Posterior cingulate gyrus (tissue), 11 donors: ENCODE measurements at regions of chr12 and their contacts with region 1.

Region 1: DNA sequence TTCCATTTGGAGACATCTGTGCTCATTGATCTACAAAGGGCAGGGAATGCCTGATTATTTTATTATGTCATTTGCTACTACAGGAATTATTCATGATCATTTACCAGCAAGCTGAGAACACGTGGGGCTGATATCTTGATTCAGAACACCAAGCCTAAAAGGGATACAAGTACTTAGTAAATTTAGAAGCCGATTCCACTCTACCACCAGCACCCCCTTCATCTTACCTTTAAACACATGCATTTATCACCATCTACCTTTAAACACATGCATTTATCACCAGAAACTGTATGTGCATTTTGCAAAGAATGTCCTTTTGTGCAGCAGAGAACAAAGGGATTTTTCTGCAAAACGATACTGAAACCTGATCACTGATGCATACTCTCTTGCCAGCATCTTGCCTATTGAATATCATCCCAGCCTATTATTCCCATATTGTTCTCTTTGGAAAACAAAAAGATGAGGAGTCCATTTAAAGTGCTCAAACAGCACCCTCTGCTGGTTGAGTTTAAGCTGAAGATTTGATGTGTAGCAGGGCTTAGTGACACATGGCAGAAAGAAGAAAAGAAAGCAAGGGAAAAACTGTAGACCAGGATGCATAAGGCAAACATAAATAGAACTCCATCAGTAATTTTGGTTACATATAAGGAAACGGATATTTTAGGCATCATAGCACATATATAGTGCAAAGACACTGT is 132.6 kb upstream of the PLEKHG7 start:
- DNase-seq: peak in 5 of 10 donors; percentile 19 to 69 (median 31)

Region 2: GRCh38 chr12:91361864-91362263 is 1208.3 kb before region 1 on chr12:
- intact Hi-C with region 1: loop called (anchors 5 kb)
- DNase-seq: no peak

Region 3: DNA sequence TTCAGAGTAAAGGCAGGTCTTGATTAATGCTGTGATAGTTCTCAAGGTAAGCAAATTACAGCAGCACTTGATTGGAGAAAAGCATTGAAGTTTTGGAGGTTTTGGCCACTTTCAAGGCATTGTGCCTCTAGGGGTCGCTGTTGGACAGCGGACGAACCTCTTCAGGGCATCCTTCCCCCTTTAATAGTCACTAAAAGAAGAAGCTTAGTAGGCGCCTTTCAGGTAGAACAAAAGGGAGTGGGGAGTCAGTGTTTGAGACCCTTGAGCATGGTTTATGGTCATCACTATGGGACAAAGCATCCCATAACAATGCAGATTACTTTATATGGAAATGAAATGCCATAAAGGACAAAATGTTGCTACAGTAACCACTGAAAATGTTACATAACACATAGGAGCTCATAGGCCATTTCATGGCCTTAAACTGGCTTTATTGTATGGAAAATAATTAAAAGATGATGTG is 1188.1 kb before region 1 on chr12:
- intact Hi-C with region 1: loop called (anchors 1 kb)
- DNase-seq: peak; percentile 71 to 97 (median 90)

Region 4: DNA sequence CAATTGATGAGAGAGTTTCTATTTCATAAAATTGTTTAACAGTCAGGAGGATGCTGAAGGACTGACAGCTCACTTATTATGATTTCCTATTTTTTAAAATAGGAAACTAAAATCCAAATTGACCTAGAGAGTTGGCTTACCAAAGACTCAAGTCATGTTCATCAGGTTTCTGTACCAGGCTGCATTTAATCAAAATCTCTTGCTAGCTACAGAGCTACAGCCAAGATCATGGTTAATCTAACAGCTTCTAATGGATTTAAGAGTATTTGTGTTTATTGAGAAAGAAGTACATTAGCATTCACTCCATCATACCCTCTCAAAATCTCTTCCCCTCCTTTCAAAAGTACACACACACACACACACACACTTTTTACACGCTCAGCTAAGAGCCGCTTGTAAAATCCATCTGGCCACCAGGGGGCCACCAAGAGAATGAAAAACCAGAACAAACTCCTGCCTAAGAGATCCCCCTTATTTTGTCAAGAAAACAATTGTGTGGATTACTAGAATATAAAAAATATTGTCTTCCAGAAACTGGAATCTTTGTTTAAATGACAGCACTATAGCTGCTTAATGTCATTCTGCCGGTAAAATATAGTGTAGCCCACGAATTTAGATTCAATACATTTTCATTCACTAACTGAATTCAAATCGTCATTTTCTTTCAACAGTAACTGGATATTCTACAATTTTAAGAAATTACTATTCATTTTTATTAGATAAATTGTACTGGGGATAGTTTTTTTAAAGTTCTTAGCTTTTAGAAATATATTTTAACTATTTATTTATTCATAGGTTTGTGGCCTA is 758.5 kb before region 1 on chr12:
- intact Hi-C with region 1: loop called (anchors 5 kb)
- DNase-seq: peak in 9 of 10 donors; percentile 25 to 90 (median 73)

Region 5: GRCh38 chr12:92478692-92479091 is 91.5 kb before region 1 on chr12:
- intact Hi-C with region 1: no loop called
- DNase-seq: no peak